Activated T-helper 1 cell treated with anti-CD3 and anti-CD28 coated beads, Interleukin-12 subunit alpha, Interleukin-12 subunit beta, Interleukin-2, Interleukin-4 antibody, amounts not matched to agents 30 ng/mL and 10 ng/mL and 1 ng/mL, durations not matched to agents 14 hours and 24 hours and 36 hours (primary cell): ENCODE measurements at regions of chrX and their contacts with region 1.

Region 1: GRCh38 chrX:150898343-150899190 is at the start of gene CD99L2:
- DNase-seq: peak; percentile 84
- H3K4me3 Mint-ChIP-seq: peak within 1 kb of the TSS; percentile 87
- H3K27ac Mint-ChIP-seq: peak within 1 kb of the TSS; percentile 61
- H3K4me1 Mint-ChIP-seq: peaks cover 13% of the 10 kb centered on the region
- H3K27me3 Mint-ChIP-seq: peaks cover 4% of the 10 kb centered on the region
- total RNA-seq, gene CD99L2: 9.0 and 10.1 TPM in 2 replicates

Region 2: DNA sequence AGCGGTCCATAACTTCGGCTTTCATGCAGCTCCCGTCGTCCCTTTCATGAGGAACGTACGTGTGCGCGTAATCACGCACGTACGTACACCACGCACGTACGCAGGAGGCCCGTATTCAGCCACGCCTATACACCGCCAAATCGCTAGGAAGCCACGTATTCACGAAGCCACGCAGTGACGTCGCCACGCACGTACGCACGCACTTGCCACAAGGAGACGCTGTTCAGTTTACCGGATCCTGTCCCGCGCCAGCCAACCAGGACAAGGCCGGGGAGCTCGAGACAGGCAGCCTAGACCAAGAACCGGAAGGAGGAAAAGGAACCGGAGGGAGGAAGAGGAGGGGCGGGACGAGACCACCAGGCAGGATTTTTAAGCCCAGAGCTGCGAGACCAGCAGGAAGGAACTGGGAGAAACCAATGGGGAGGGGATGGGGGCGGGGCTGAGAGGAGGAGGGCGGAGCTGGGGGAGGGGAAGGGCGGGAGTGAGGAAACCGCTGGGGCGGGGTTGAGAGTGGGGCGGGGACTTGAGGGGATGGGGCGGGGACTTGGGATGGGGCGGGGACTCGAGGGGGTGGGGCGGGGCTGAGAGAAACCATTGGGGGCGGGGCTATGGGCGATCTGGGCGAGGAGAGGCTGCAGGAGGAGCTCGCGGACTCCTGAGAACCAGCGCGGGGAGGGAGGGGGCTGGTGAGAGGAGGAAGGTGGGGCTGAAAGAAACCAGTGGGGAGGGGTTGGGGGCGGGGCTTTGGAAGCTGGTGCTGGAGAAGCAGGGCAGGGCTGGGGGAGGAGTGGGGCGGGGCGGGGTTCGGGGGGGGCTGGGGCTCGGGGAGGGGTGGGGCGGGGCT is 959.9 kb before region 1 on chrX and contains the start of gene EOLA2:
- intact Hi-C with region 1: loop called (anchors 10 kb)
- DNase-seq: peak; percentile 89
- H3K4me3 Mint-ChIP-seq: peak within 1 kb of the TSS; percentile 92
- H3K27ac Mint-ChIP-seq: peak within 1 kb of the TSS; percentile 100
- H3K4me1 Mint-ChIP-seq: peaks cover 4% of the 10 kb centered on the region
- H3K27me3 Mint-ChIP-seq: no peaks in the 10 kb centered on the region
- total RNA-seq, gene EOLA2: 54.2 and 63.3 TPM in 2 replicates

Region 3: GRCh38 chrX:150715184-150715583 is 183.4 kb before region 1 on chrX:
- intact Hi-C with region 1: no loop called
- DNase-seq: no peak
- H3K4me3 Mint-ChIP-seq: no peak overlapping the region
- H3K27ac Mint-ChIP-seq: no peak overlapping the region
- H3K4me1 Mint-ChIP-seq: peaks cover 11% of the 10 kb centered on the region
- H3K27me3 Mint-ChIP-seq: no peaks in the 10 kb centered on the region

Region 4: GRCh38 chrX:150772150-150772970 is 126.2 kb before region 1 on chrX:
- intact Hi-C with region 1: loop called (anchors 2 kb)
- DNase-seq: peak; percentile 47
- H3K4me3 Mint-ChIP-seq: no peak overlapping the region
- H3K27ac Mint-ChIP-seq: no peak overlapping the region
- H3K4me1 Mint-ChIP-seq: no peaks in the 10 kb centered on the region
- H3K27me3 Mint-ChIP-seq: no peaks in the 10 kb centered on the region

Region 5: GRCh38 chrX:150982788-150983520 is 84.4 kb after region 1 on chrX and contains the start of gene HMGB3:
- intact Hi-C with region 1: loop called (anchors 1 kb)
- DNase-seq: peak; percentile 82
- H3K4me3 Mint-ChIP-seq: peak within 1 kb of the TSS; percentile 71
- H3K27ac Mint-ChIP-seq: peak within 1 kb of the TSS; percentile 44
- H3K4me1 Mint-ChIP-seq: peaks cover 6% of the 10 kb centered on the region
- H3K27me3 Mint-ChIP-seq: no peaks in the 10 kb centered on the region
- total RNA-seq, gene HMGB3: 29.6 and 32.3 TPM in 2 replicates

Region 6: DNA sequence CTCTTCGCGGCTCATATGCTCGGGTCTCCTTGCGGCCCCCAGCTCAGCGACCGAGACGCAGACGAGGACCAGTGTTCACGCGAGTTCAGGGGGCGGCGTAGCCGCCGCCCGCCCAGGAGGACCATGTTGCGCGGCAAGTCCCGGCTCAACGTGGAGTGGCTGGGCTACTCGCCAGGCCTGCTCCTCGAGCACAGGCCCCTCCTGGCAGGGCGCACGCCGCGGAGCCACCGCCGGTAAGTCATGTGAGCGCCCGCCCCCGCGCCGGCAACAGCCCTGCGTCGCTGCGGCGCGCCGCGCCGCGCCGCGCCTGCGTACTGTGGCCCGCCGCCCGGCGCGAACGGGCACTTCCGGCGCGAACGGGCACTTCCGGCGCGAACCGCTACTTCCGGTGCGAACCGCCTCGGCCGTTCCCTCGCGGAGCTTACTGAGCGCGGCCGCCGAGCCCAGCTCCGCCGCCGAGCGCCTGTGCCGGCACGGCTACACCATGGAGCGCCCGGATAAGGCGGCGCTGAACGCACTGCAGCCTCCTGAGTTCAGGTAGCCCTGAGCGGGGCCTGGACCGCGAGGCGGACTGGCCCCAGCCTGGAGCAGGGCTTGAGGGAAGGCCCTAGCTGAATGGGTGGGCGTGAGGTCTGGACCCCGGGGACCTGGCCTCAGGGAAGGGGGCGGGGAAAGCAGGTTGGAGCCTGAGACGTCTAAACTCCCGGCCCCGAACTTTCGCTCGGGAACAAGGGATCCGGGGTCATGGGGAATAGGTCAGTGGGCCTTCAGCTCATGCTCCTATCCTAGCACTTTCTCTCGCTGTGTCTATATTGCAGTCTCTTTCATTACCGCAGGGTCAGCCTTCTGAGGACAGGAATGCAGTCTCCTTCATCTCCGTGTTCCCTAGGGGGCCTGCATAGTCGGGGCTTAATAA is 498.5 kb after region 1 on chrX and contains the start of gene VMA21:
- intact Hi-C with region 1: loop called (anchors 2 kb)
- DNase-seq: peak; percentile 79
- H3K4me3 Mint-ChIP-seq: peak within 1 kb of the TSS; percentile 93
- H3K27ac Mint-ChIP-seq: peak within 1 kb of the TSS; percentile 94
- H3K4me1 Mint-ChIP-seq: peaks cover 52% of the 10 kb centered on the region
- H3K27me3 Mint-ChIP-seq: peaks cover 3% of the 10 kb centered on the region
- total RNA-seq, gene VMA21: 39.4 and 49.2 TPM in 2 replicates